CD8-positive, alpha-beta T cell (primary cell): ENCODE measurements at regions of chr12 and their contacts with region 1.

Region 1: DNA sequence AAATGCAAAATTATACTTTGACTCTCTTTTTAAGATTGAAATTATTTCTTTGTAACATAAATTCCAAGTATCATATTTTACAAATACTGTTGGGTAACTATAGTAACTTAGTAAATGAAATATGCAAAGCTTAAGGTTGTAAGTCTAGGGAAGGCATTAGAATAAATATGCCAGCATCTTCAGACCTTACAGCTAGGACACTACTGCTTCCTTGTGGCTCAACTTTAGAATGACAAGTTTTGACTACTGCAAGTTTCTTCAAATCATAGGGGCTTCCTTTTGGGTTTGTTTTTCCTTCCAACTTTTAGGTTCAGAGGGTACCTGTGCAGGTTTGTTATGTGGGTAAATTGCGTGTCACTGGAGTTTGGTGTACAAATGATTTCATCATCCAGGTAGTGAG is 17.7 kb upstream of the ANP32D start:
- DNase-seq: peak in 2 of 9 experiments; percentile 45 to 63
- ATAC-seq: peak; percentile 54
- H3K4me3 ChIP-seq: no peak overlapping the region
- H3K4me3 Mint-ChIP-seq: no peak overlapping the region
- H3K27ac ChIP-seq: no peak overlapping the region
- H3K27ac Mint-ChIP-seq: no peak overlapping the region
- H3K4me1 ChIP-seq: no peaks in the 10 kb centered on the region
- H3K4me1 Mint-ChIP-seq: no peaks in the 10 kb centered on the region
- H3K27me3 ChIP-seq: no peaks in the 10 kb centered on the region
- H3K27me3 Mint-ChIP-seq: peaks cover 11% of the 10 kb centered on the region
- CTCF ChIP-seq: no peak

Region 2: DNA sequence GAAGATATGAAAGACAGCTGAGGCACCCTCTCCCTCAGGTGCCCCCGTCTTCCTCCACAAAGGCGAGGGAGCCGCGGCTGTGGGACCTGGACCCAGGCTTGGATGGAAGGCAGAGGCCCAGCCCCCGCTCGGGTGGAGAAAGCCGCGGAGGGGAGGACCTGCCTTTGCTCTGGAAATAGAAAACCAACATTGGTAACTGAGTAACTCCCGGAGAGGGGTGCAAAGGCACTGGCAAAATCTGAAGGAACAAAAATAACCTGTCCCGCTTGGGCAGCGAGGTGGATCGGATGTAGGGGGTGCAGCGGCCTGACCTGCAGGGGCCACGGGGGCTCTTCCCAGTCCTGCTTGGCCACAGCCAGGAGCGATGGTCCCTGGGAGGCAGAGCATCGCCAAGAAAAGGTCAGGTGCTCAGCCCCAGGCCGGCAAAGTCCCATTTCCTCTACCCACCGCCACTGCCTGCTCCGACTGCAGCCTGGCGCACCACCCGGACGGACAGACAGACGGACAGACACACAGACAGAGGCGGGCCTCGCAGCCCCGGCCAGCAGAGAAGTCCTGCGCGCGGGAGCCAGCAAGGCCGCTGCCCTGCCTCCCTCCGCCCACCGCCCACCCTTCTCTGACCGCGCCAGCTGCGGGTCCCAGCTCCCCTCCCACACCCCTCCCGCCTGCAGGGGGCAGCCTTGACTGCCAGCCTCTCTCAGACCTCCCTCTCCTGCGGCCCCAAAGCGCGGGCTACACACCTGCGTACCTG is 512.6 kb before region 1 on chr12:
- CTCF ChIA-PET with region 1: no interaction called
- POLR2A ChIA-PET with region 1: no interaction called
- intact Hi-C with region 1: loop called in 1 of 2 experiments (anchors 5 kb)
- DNase-seq: peak in 8 of 9 experiments; percentile 25 to 68 (median 59)
- ATAC-seq: peak; percentile 74
- H3K4me3 ChIP-seq: no peak overlapping the region
- H3K4me3 Mint-ChIP-seq: no peak overlapping the region
- H3K27ac ChIP-seq: no peak overlapping the region
- H3K27ac Mint-ChIP-seq: no peak overlapping the region
- H3K4me1 ChIP-seq: no peaks in the 10 kb centered on the region
- H3K4me1 Mint-ChIP-seq: peaks cover 7% of the 10 kb centered on the region
- H3K27me3 ChIP-seq: peaks cover 0 to 10% of the 10 kb centered on the region in 2 experiments
- H3K27me3 Mint-ChIP-seq: peaks cover 30% of the 10 kb centered on the region
- CTCF ChIP-seq: peak; percentile 53

Region 3: GRCh38 chr12:48084066-48084465 is 370.6 kb before region 1 on chr12:
- CTCF ChIA-PET with region 1: no interaction called
- POLR2A ChIA-PET with region 1: no interaction called
- intact Hi-C with region 1: loop called in 1 of 2 experiments (anchors 10 kb)
- DNase-seq: peak in 2 of 9 experiments; percentile 13 to 33
- ATAC-seq: no peak
- H3K4me3 ChIP-seq: no peak overlapping the region
- H3K4me3 Mint-ChIP-seq: no peak overlapping the region
- H3K27ac ChIP-seq: no peak overlapping the region
- H3K27ac Mint-ChIP-seq: no peak overlapping the region
- H3K4me1 ChIP-seq: no peaks in the 10 kb centered on the region
- H3K4me1 Mint-ChIP-seq: no peaks in the 10 kb centered on the region
- H3K27me3 ChIP-seq: no peaks in the 10 kb centered on the region
- H3K27me3 Mint-ChIP-seq: no peaks in the 10 kb centered on the region
- CTCF ChIP-seq: no peak

Region 4: GRCh38 chr12:48183091-48183875 is 271.4 kb before region 1 on chr12 and contains the start of gene CCDC184:
- CTCF ChIA-PET with region 1: interaction called, 3 read pairs
- POLR2A ChIA-PET with region 1: no interaction called
- intact Hi-C with region 1: loop called in 1 of 2 experiments (anchors 10 kb)
- DNase-seq: peak; percentile 48 to 93 (median 74)
- ATAC-seq: peak; percentile 80
- H3K4me3 ChIP-seq: peak within 1 kb of the TSS; percentile 75 to 99
- H3K4me3 Mint-ChIP-seq: peak within 1 kb of the TSS; percentile 93
- H3K27ac ChIP-seq: peak within 1 kb of the TSS; percentile 50 to 85
- H3K27ac Mint-ChIP-seq: peak within 1 kb of the TSS; percentile 43
- H3K4me1 ChIP-seq: peaks cover 14% of the 10 kb centered on the region
- H3K4me1 Mint-ChIP-seq: peaks cover 6% of the 10 kb centered on the region
- H3K27me3 ChIP-seq: peaks cover 6 to 12% of the 10 kb centered on the region in 2 experiments
- H3K27me3 Mint-ChIP-seq: peaks cover 29% of the 10 kb centered on the region
- CTCF ChIP-seq: peak; percentile 54
- total RNA-seq, gene CCDC184: 0.90 to 1.3 TPM

Region 5: GRCh38 chr12:48263617-48264016 is 191.1 kb before region 1 on chr12:
- CTCF ChIA-PET with region 1: no interaction called
- POLR2A ChIA-PET with region 1: no interaction called
- intact Hi-C with region 1: loop called (anchors 10 kb)
- DNase-seq: no peak
- ATAC-seq: no peak
- H3K4me3 ChIP-seq: no peak overlapping the region
- H3K4me3 Mint-ChIP-seq: no peak overlapping the region
- H3K27ac ChIP-seq: no peak overlapping the region
- H3K27ac Mint-ChIP-seq: no peak overlapping the region
- H3K4me1 ChIP-seq: no peaks in the 10 kb centered on the region
- H3K4me1 Mint-ChIP-seq: no peaks in the 10 kb centered on the region
- H3K27me3 ChIP-seq: peaks cover 0 to 5% of the 10 kb centered on the region in 2 experiments
- H3K27me3 Mint-ChIP-seq: peaks cover 4% of the 10 kb centered on the region
- CTCF ChIP-seq: no peak

Region 6: DNA sequence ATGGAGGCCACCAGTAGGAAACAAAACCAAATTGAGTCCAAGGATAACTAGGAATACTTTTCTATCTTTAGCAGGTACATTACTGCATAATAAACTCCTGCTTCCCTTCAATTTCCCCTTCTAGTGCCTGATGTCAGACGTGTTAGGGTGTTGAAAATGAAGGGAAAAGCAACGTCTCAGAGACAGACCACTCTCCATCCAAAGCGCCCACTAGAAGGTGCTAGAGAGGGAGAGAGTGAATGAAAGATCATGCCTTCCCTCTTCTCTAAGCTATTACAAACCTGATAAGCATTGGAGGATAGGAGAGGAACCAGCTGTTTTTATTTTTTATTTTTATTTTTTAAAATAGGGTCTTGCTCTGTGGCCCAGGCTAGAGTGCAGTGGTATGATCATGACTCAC is 168.0 kb before region 1 on chr12:
- CTCF ChIA-PET with region 1: interaction called, 4 read pairs
- POLR2A ChIA-PET with region 1: no interaction called
- intact Hi-C with region 1: loop called in 1 of 2 experiments (anchors 2 kb)
- DNase-seq: peak in 2 of 9 experiments; percentile 19 to 37
- ATAC-seq: peak; percentile 30
- H3K4me3 ChIP-seq: no peak overlapping the region
- H3K4me3 Mint-ChIP-seq: no peak overlapping the region
- H3K27ac ChIP-seq: peak overlapping the region; percentile 10 to 36
- H3K27ac Mint-ChIP-seq: peak overlapping the region; percentile 81
- H3K4me1 ChIP-seq: peaks cover 13% of the 10 kb centered on the region
- H3K4me1 Mint-ChIP-seq: peaks cover 20% of the 10 kb centered on the region
- H3K27me3 ChIP-seq: no peaks in the 10 kb centered on the region
- H3K27me3 Mint-ChIP-seq: peaks cover 3% of the 10 kb centered on the region
- CTCF ChIP-seq: no peak